SK-N-SH (cell line): ENCODE measurements at regions of chr2 and their contacts with region 1.

Region 1: DNA sequence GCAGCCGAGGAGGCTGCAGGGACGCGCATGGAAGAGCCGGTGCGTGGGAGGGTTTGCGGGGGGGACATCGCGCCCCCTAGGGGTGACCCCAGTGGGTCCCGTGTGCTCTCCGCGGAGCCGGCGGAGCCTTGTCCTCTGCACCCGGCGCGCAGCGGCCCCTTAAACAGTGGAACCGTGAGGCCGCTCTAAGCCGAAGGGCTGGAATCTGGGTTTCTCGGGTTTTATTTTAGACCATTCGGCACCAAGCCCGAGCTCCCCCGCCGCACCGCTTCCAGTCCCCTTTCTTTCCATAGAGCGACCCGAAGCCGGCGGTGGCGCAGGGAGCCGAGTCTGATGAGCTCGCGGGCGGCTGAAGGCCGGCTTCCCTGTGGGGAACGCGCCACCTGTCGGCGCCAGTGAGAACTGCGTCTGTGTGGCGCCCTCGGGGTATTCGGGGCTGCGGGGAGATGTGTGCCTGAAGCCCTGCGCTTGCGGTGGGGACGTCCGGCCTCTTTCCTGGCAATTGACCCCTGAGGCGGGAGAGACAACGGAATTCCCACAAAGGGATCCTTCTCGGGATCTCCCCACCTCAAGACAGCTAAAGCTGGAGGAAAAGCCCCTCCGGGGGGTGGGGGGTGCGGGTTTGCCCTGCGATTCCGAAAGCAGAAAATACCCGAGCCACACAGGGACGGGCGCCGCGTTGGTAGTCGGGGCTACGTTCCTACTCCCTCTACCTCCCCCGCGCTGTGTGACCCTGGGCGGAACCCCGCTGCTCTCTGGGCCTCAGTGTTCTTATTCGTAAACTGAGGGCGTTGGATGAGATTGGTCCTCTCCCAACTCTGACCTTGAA is 8.2 kb upstream of the EN1 start:
- DNase-seq: peak; percentile 93
- H3K4me3 ChIP-seq: peak overlapping the region; percentile 24 to 65
- H3K27ac ChIP-seq: no peak overlapping the region
- H3K4me1 ChIP-seq: no peaks in the 10 kb centered on the region; a peak in 1 of 4 replicates
- H3K27me3 ChIP-seq: peaks cover 99% of the 10 kb centered on the region
- CTCF ChIP-seq: peak; percentile 87
- EP300 ChIP-seq: no peak
- RAD21 ChIP-seq: peak; percentile 82

Region 2: GRCh38 chr2:118046634-118047210 is 808.9 kb before region 1 on chr2:
- CTCF ChIA-PET with region 1: interaction called, 27 read pairs
- POLR2A ChIA-PET with region 1: interaction called, 4 read pairs
- DNase-seq: peak; percentile 23
- H3K4me3 ChIP-seq: peak overlapping the region in 1 of 2 experiments; percentile 2; a peak in 1 of 4 replicates
- H3K27ac ChIP-seq: no peak overlapping the region
- H3K4me1 ChIP-seq: peaks cover 0 to 8% of the 10 kb centered on the region in 2 experiments; a peak in 1 of 4 replicates
- H3K27me3 ChIP-seq: no peaks in the 10 kb centered on the region; the same call in 1 of the 2 replicates
- CTCF ChIP-seq: peak; percentile 72
- EP300 ChIP-seq: no peak
- RAD21 ChIP-seq: peak; percentile 88

Region 3: GRCh38 chr2:118221666-118222594 is 633.7 kb before region 1 on chr2:
- CTCF ChIA-PET with region 1: interaction called, 57 read pairs
- POLR2A ChIA-PET with region 1: no interaction called
- DNase-seq: peak; percentile 72
- H3K4me3 ChIP-seq: no peak overlapping the region; a peak in 1 of 4 replicates
- H3K27ac ChIP-seq: no peak overlapping the region
- H3K4me1 ChIP-seq: peaks cover 0 to 5% of the 10 kb centered on the region in 2 experiments; a peak in 1 of 4 replicates
- H3K27me3 ChIP-seq: peaks cover 56% of the 10 kb centered on the region
- CTCF ChIP-seq: peak; percentile 80
- EP300 ChIP-seq: no peak
- RAD21 ChIP-seq: peak; percentile 87

Region 4: GRCh38 chr2:118371515-118371914 is 484.1 kb before region 1 on chr2:
- CTCF ChIA-PET with region 1: interaction called, 14 read pairs
- POLR2A ChIA-PET with region 1: no interaction called
- DNase-seq: peak; percentile 31
- H3K4me3 ChIP-seq: peak overlapping the region in 1 of 2 experiments; percentile 40; a peak in 1 of 4 replicates
- H3K27ac ChIP-seq: no peak overlapping the region
- H3K4me1 ChIP-seq: no peaks in the 10 kb centered on the region
- H3K27me3 ChIP-seq: peaks cover 4% of the 10 kb centered on the region; the same call in 1 of the 2 replicates
- CTCF ChIP-seq: peak; percentile 72
- EP300 ChIP-seq: no peak
- RAD21 ChIP-seq: peak; percentile 75

Region 5: GRCh38 chr2:118539290-118539689 is 316.4 kb before region 1 on chr2:
- CTCF ChIA-PET with region 1: interaction called, 15 read pairs
- POLR2A ChIA-PET with region 1: no interaction called
- DNase-seq: no peak
- H3K4me3 ChIP-seq: no peak overlapping the region
- H3K27ac ChIP-seq: no peak overlapping the region
- H3K4me1 ChIP-seq: no peaks in the 10 kb centered on the region
- H3K27me3 ChIP-seq: no peaks in the 10 kb centered on the region; the same call in 1 of the 2 replicates
- CTCF ChIP-seq: peak; percentile 62
- EP300 ChIP-seq: no peak
- RAD21 ChIP-seq: peak; percentile 46

Region 6: DNA sequence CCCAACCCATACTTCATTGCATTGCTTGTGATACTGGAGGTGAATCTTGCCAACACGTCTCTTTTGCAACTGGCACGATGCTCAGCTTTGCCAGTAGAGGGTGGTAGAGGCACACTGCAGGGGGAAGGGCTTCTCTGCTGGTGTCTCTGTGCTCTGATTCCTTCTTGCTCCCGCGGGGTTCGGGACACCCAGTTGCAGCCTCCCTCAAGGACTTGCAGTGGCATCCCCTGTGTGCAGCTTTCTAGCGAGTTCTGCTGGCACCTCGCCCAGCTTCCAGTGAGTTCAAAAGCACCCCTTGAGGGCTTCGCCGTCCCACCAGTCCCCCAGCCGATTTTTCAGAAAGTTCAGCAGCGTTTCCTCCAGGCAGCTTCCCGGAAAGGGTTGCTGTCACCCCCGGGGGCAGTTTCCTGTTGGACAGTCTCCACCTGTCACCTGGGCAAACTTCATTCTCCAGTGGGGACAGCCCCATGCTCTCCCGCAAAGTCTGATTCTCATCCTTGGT is 27.1 kb after region 1 on chr2:
- CTCF ChIA-PET with region 1: interaction called, 13 read pairs
- POLR2A ChIA-PET with region 1: no interaction called
- DNase-seq: peak; percentile 45
- H3K4me3 ChIP-seq: peak overlapping the region in 1 of 2 experiments; percentile 40; a peak in 1 of 4 replicates
- H3K27ac ChIP-seq: no peak overlapping the region
- H3K4me1 ChIP-seq: peaks cover 0 to 4% of the 10 kb centered on the region in 2 experiments; a peak in 1 of 4 replicates
- H3K27me3 ChIP-seq: no peaks in the 10 kb centered on the region
- CTCF ChIP-seq: peak; percentile 75
- EP300 ChIP-seq: no peak
- RAD21 ChIP-seq: peak; percentile 70

Region 7: GRCh38 chr2:118893100-118893499 is 37.4 kb after region 1 on chr2:
- CTCF ChIA-PET with region 1: no interaction called
- POLR2A ChIA-PET with region 1: no interaction called
- DNase-seq: no peak
- H3K4me3 ChIP-seq: no peak overlapping the region
- H3K27ac ChIP-seq: no peak overlapping the region
- H3K4me1 ChIP-seq: no peaks in the 10 kb centered on the region
- H3K27me3 ChIP-seq: no peaks in the 10 kb centered on the region
- CTCF ChIP-seq: no peak
- EP300 ChIP-seq: no peak
- RAD21 ChIP-seq: no peak

Region 8: GRCh38 chr2:118989481-118989880 is 133.8 kb after region 1 on chr2:
- CTCF ChIA-PET with region 1: no interaction called
- POLR2A ChIA-PET with region 1: no interaction called
- DNase-seq: no peak
- H3K4me3 ChIP-seq: no peak overlapping the region
- H3K27ac ChIP-seq: no peak overlapping the region
- H3K4me1 ChIP-seq: no peaks in the 10 kb centered on the region
- H3K27me3 ChIP-seq: peaks cover 5% of the 10 kb centered on the region; the same call in 1 of the 2 replicates
- CTCF ChIP-seq: no peak
- EP300 ChIP-seq: no peak
- RAD21 ChIP-seq: no peak